Mammary epithelial cell (primary cell): ENCODE measurements at regions of chr19 and their contacts with region 1.

Region 1: DNA sequence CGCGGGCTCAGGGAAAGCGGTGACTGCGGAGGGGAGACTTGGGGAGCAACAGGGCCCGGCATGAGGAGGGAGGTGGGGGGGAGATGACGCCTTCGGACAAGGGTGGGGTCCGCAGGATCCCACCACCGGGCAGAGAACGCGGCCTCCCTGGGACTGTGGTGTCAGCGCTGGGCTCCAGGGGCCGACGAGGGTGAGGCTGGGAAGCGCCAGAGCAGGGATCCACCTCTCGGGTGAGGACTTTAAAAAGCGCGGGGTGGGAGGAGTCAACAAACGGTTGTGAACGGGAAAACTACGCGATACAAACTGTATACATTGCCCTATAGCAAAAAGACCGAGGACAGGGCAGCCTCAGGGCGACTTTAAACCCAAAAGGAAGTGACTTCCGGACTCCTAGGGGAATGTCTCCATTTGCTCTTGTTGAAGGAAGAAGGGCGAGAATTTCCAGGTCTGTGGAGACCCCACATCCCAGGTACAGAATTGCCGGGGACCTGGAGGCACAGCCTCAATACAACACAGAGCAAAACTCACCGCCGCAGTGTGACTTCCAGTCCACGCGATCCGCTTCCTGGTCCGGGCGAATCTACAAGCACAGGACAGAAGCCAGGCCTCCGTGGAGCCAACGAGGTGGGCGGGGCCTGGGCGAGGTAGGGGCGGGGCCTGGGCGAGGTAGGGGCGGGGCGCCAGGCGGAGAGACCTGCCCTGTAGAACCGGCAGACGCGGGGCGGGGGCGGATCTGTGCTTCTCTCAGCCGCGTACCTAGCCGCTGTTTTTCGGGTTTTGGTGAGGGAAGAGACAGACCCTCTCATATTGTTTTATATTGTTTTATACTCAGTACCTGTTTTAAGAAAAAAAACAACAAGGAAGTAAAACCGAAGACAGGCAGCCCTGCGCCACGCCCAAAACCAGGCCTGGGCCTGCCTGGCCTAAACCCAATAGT is at the start of gene ZNF888:
- DNase-seq: peak; percentile 86
- H3K4me3 ChIP-seq: peak within 1 kb of the TSS; percentile 62 to 95 (median 69)
- H3K27ac ChIP-seq: peak within 1 kb of the TSS; percentile 81
- H3K4me1 ChIP-seq: peaks cover 13% of the 10 kb centered on the region
- H3K27me3 ChIP-seq: no peaks in the 10 kb centered on the region
- CTCF ChIP-seq: no peak
- total RNA-seq, gene ZNF888: 5.7 to 6.0 TPM

Region 2: GRCh38 chr19:52570000-52570861 is 352.9 kb before region 1 on chr19 and contains the start of gene ZNF701:
- CTCF ChIA-PET with region 1: no interaction called
- dilution Hi-C with region 1: no loop called
- in situ Hi-C with region 1: no loop called
- intact Hi-C with region 1: no loop called
- DNase-seq: peak; percentile 91
- H3K4me3 ChIP-seq: peak within 1 kb of the TSS; percentile 66 to 92 (median 87)
- H3K27ac ChIP-seq: peak within 1 kb of the TSS; percentile 82
- H3K4me1 ChIP-seq: peaks cover 3% of the 10 kb centered on the region
- H3K27me3 ChIP-seq: no peaks in the 10 kb centered on the region
- CTCF ChIP-seq: peak in 1 of 2 donors; percentile 33
- total RNA-seq, gene ZNF701: 10.8 to 13.2 TPM

Region 3: GRCh38 chr19:52853880-52854279 is 69.2 kb before region 1 on chr19:
- CTCF ChIA-PET with region 1: no interaction called
- dilution Hi-C with region 1: no loop called
- in situ Hi-C with region 1: no loop called
- intact Hi-C with region 1: loop called (anchors 2 kb)
- DNase-seq: no peak
- H3K4me3 ChIP-seq: no peak overlapping the region
- H3K27ac ChIP-seq: no peak overlapping the region
- H3K4me1 ChIP-seq: peaks cover 3% of the 10 kb centered on the region
- H3K27me3 ChIP-seq: no peaks in the 10 kb centered on the region
- CTCF ChIP-seq: no peak

Region 4: DNA sequence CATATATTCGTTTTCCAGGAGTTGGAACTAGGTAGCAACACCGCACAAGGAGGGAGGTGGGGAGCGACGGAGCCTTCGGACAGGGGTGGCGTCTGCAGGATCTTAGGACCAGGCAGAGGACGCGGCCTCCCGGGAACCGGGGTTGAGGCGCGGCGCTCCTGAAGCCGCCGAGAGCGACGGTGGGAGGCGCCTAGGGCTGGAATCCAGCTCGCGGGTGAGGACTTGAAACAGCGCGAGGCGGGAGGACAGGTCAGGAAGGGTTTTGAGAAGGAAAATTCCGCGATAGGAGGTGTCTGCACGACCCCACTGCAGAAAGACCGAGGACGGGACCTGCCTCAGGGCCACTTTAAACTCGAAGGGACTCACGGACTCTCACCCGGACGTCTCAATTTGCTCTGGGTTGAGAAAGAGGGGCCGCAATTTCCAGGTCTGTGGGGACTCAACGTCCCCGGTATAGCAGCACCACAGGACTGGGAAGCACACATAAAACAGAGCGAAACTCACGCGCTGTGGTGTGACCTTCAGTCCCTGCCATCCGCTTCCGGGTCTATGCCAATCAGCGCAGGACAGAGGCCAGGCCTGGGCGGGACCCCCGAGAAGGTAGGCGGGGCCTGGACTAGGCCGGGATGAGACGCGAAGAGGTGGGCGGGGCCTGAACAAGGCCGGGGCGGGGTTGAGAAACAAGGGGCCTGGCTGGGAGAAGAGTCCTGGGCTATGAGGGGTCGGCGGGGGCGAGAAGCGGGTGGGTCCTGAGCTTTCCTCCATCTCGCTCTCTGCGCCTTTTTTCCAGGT is 25.8 kb before region 1 on chr19 and contains the start of gene ZNF320:
- CTCF ChIA-PET with region 1: no interaction called
- dilution Hi-C with region 1: no loop called
- in situ Hi-C with region 1: no loop called
- intact Hi-C with region 1: loop called (anchors 2 kb)
- DNase-seq: peak; percentile 88
- H3K4me3 ChIP-seq: peak within 1 kb of the TSS; percentile 62 to 95 (median 70)
- H3K27ac ChIP-seq: peak within 1 kb of the TSS; percentile 80
- H3K4me1 ChIP-seq: no peaks in the 10 kb centered on the region
- H3K27me3 ChIP-seq: no peaks in the 10 kb centered on the region
- CTCF ChIP-seq: no peak
- total RNA-seq, gene ZNF320: 13.3 to 18.5 TPM

Region 5: GRCh38 chr19:52942386-52943133 is 19.5 kb after region 1 on chr19:
- CTCF ChIA-PET with region 1: no interaction called
- dilution Hi-C with region 1: no loop called
- in situ Hi-C with region 1: no loop called
- intact Hi-C with region 1: loop called (anchors 2 kb)
- DNase-seq: peak; percentile 79
- H3K4me3 ChIP-seq: peak overlapping the region; percentile 67 to 86 (median 76)
- H3K27ac ChIP-seq: peak overlapping the region; percentile 58
- H3K4me1 ChIP-seq: peaks cover 10% of the 10 kb centered on the region
- H3K27me3 ChIP-seq: no peaks in the 10 kb centered on the region
- CTCF ChIP-seq: no peak

Region 6: DNA sequence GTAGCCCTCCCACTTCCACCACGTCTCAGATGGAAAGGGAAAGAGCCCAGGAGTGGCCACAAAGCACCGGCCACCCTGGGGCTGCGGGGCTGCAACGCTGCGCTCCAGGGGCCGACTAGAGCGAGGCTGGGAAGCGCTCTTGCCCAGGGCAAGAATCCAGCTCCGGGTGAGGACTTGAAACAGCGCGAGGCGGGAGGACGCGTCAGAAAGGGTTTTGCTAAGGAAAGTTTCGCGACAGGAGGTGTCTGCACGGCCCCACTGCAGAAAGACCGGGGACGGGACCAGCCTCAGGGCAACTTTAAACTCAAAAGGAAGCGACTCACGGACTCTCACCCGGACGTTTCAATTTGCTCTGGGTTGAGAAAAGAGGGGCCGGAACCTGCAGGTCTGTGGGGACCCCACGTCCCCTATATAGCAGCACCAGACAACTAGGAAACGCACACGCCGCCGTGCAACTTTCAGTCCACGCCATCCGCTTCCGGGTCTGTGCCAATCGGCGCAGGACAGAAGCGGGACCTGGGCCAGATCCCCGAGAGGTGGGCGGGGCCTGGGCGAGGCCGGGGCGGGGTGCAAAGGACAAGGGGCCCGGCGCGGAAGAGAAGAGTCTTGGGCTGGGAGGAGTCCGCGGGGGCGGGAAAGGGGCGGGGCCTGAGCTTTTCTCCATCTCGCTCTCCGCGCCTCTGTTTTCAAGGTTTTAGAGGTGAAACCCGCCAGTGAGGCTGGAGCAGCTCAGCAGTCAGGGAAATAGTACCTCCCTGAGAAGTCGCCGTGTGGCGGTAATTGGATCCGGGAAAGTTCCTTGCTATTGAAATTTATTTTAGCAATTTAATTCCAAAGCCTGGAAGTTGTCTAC is 39.5 kb after region 1 on chr19 and contains the start of gene ZNF816:
- CTCF ChIA-PET with region 1: no interaction called
- dilution Hi-C with region 1: no loop called
- in situ Hi-C with region 1: no loop called
- intact Hi-C with region 1: loop called (anchors 2 kb)
- DNase-seq: peak; percentile 95
- H3K4me3 ChIP-seq: peak within 1 kb of the TSS; percentile 65 to 72 (median 71)
- H3K27ac ChIP-seq: peak within 1 kb of the TSS; percentile 50
- H3K4me1 ChIP-seq: peaks cover 8% of the 10 kb centered on the region
- H3K27me3 ChIP-seq: no peaks in the 10 kb centered on the region
- CTCF ChIP-seq: no peak
- total RNA-seq, gene ZNF816: 6.0 to 10.8 TPM

Region 7: DNA sequence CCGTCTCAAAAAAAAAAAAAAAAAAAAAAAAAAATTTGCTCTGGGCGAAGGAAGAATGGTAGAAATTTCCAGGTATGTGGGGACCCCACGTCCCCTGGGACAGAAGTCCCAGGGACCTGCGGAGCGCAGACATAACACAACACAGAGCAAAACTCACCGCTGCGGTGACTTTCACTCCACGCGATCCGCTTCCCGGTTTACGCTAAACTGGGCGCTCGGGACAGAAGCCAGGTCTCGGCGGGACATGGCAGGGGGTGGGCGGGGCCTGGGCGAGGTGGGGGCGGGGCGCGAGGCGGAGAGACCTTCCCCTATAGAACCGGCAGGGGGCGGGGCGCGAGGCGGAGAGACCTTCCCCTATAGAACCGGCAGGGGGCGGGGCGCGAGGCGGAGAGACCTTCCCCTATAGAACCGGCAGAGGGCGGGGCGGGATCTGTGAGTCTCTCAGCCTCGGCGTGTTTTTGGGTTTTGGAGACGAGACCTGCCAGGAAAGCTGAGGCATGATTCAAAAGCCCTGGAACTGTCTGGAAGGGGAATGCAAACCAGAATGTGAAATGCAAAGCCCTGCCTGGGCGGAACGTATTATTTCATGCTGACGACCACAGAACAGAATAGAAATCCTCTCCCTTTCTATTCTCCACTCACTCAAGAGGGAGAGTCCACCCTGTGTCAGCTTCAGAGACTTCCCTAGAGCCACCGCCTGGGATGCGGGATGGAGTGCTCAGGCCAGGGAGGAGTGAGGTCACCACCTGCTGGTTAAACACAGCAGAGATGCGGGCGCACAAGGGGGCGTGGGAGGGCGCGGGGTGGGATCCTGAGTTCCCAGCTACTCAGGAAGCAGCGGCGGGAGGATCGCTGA is 70.4 kb after region 1 on chr19:
- CTCF ChIA-PET with region 1: no interaction called
- dilution Hi-C with region 1: no loop called
- in situ Hi-C with region 1: no loop called
- intact Hi-C with region 1: loop called (anchors 2 kb)
- DNase-seq: peak; percentile 71
- H3K4me3 ChIP-seq: peak overlapping the region; percentile 42 to 47 (median 44)
- H3K27ac ChIP-seq: no peak overlapping the region
- H3K4me1 ChIP-seq: peaks cover 10% of the 10 kb centered on the region
- H3K27me3 ChIP-seq: no peaks in the 10 kb centered on the region
- CTCF ChIP-seq: peak in 1 of 2 donors; percentile 56